Activated naive CD4-positive, alpha-beta T cell treated with anti-CD3 and anti-CD28 coated beads for 36 hours (primary cell): ENCODE measurements at regions of chr14 and their contacts with region 1.

Region 1: GRCh38 chr14:106681568-106681967 is 1155.2 kb downstream of the TMEM121 start:
- DNase-seq: no peak
- H3K4me3 Mint-ChIP-seq: no peak overlapping the region
- H3K27ac Mint-ChIP-seq: no peak overlapping the region
- H3K4me1 Mint-ChIP-seq: no peaks in the 10 kb centered on the region
- H3K27me3 Mint-ChIP-seq: peaks cover 7% of the 10 kb centered on the region

Region 2: GRCh38 chr14:106665814-106666213 is 15.8 kb before region 1 on chr14:
- CTCF ChIA-PET with region 1: interaction called, 32 read pairs
- intact Hi-C with region 1: no loop called
- DNase-seq: no peak
- H3K4me3 Mint-ChIP-seq: no peak overlapping the region
- H3K27ac Mint-ChIP-seq: no peak overlapping the region
- H3K4me1 Mint-ChIP-seq: peaks cover 24% of the 10 kb centered on the region
- H3K27me3 Mint-ChIP-seq: peaks cover 5% of the 10 kb centered on the region